OCI-LY7 (cell line): ENCODE measurements at regions of chr3 and their contacts with region 1.

Region 1: GRCh38 chr3:142976621-142977398 is 13.3 kb upstream of the PAQR9 start:
- DNase-seq: no peak
- H3K4me3 ChIP-seq: no peak overlapping the region
- H3K27ac ChIP-seq: no peak overlapping the region
- H3K4me1 ChIP-seq: no peaks in the 10 kb centered on the region
- CTCF ChIP-seq: no peak

Region 2: DNA sequence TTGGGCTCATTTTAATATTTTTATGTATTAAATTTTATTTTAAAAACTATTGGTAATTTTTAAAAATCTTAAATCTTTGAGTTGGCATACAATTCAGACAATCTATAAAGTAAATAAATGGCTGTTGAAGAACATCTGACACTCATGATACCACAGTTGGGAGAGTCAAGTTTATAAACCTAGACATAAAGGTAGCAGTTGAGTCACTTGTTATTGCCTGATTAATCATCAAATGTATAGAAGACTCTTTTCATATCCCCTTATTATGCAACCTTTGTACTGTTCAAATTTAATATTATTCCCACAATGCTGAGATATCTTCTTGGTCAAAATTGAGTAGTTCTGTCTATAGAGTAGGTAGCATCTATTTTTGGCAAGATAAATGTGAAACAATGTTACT is 32.9 kb before region 1 on chr3:
- CTCF ChIA-PET with region 1: no interaction called
- POLR2A ChIA-PET with region 1: no interaction called
- intact Hi-C with region 1: loop called (anchors 1 kb)
- DNase-seq: no peak
- H3K4me3 ChIP-seq: no peak overlapping the region
- H3K27ac ChIP-seq: no peak overlapping the region
- H3K4me1 ChIP-seq: no peaks in the 10 kb centered on the region
- CTCF ChIP-seq: no peak